Natural killer cell (primary cell): ENCODE measurements at regions of chr18 and their contacts with region 1.

Region 1: DNA sequence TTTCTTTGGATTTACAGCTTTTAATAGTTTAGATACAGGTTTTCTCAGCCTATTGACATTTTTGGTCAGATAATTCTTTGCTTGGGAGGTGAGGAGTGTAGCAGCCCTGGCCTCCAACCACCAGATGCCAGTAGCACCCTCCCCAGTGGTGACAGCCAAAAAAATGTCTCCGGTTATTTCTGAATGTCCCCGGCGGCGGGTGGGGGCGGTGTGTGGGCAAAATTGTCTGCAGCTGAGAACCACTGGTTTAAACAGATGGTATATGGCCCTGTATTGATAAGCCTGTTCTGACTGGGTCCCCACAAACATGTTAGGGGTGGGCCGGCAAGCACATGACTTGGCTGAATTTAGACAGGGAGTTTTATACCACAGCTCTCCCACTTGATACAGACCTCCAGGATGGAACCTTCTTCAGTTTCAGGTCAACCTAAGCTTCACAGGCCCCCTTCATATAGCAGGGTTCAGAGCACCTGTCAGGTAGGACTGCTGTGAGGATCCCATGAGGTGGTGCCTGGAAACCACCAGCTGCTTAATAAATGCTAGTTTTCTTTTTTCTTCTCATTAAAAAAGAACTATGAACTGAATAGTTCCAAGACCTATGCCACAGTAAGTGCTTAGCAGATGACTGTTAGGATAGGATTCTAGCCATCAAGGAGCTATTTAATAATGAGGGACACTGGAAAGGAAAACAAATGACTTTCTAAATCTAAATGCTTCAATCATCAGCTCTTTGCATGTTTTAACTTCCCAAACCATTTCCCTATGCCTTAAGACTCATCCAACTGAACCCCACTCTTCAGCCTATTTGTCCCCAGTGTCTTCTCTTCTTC is 18.1 kb downstream of the LPIN2 start:
- DNase-seq: peak; percentile 61 to 88
- ATAC-seq: peak; percentile 93 to 97 (median 96)
- H3K4me3 ChIP-seq: no peak overlapping the region
- H3K4me3 Mint-ChIP-seq: no peak overlapping the region
- H3K27ac ChIP-seq: no peak overlapping the region
- H3K27ac Mint-ChIP-seq: peak overlapping the region; percentile 35 to 63
- H3K4me1 ChIP-seq: peaks cover 28% of the 10 kb centered on the region
- H3K4me1 Mint-ChIP-seq: peaks cover 41 to 56% of the 10 kb centered on the region in 2 donors
- H3K27me3 ChIP-seq: no peaks in the 10 kb centered on the region
- H3K27me3 Mint-ChIP-seq: no peaks in the 10 kb centered on the region
- CTCF ChIP-seq: peak; percentile 74

Region 2: DNA sequence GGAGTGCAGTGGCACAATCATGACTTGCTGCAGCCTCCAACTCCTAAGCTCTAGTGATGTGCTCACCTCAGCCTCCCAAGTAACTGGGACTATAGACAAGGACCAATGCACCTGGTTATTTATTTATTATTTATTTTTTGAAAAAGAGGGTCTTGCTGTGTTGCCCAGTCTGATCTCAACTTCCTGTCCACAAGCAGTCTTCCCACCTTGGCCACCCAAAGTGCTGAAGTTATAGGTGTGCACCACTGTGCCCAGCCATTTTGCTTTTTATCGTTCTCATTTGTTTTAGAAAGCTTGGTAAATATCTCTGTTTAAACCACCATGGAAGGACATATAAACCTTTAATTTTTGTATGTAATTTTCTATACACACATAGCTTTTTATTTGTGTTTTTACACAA is 265.1 kb before region 1 on chr18:
- intact Hi-C with region 1: no loop called
- DNase-seq: no peak
- ATAC-seq: no peak
- H3K4me3 ChIP-seq: no peak overlapping the region
- H3K4me3 Mint-ChIP-seq: no peak overlapping the region
- H3K27ac ChIP-seq: no peak overlapping the region
- H3K27ac Mint-ChIP-seq: no peak overlapping the region
- H3K4me1 ChIP-seq: no peaks in the 10 kb centered on the region
- H3K4me1 Mint-ChIP-seq: peaks cover 0 to 6% of the 10 kb centered on the region in 2 donors
- H3K27me3 ChIP-seq: no peaks in the 10 kb centered on the region
- H3K27me3 Mint-ChIP-seq: no peaks in the 10 kb centered on the region
- CTCF ChIP-seq: no peak

Region 3: GRCh38 chr18:3129053-3129864 is 134.4 kb after region 1 on chr18:
- intact Hi-C with region 1: loop called (anchors 1 kb)
- DNase-seq: peak; percentile 72 to 90
- ATAC-seq: peak; percentile 92 to 99 (median 99)
- H3K4me3 ChIP-seq: no peak overlapping the region
- H3K4me3 Mint-ChIP-seq: no peak overlapping the region
- H3K27ac ChIP-seq: no peak overlapping the region
- H3K27ac Mint-ChIP-seq: no peak overlapping the region
- H3K4me1 ChIP-seq: no peaks in the 10 kb centered on the region
- H3K4me1 Mint-ChIP-seq: peaks cover 7 to 8% of the 10 kb centered on the region in 2 donors
- H3K27me3 ChIP-seq: no peaks in the 10 kb centered on the region
- H3K27me3 Mint-ChIP-seq: peaks cover 0 to 3% of the 10 kb centered on the region in 2 donors
- CTCF ChIP-seq: peak; percentile 75

Region 4: GRCh38 chr18:3151399-3152264 is 156.8 kb after region 1 on chr18:
- intact Hi-C with region 1: loop called (anchors 1 kb)
- DNase-seq: peak in 1 of 2 donors; percentile 61
- ATAC-seq: peak in 2 of 3 donors; percentile 44 to 46
- H3K4me3 ChIP-seq: no peak overlapping the region
- H3K4me3 Mint-ChIP-seq: no peak overlapping the region
- H3K27ac ChIP-seq: no peak overlapping the region
- H3K27ac Mint-ChIP-seq: no peak overlapping the region
- H3K4me1 ChIP-seq: peaks cover 3% of the 10 kb centered on the region
- H3K4me1 Mint-ChIP-seq: peaks cover 0 to 4% of the 10 kb centered on the region in 2 donors
- H3K27me3 ChIP-seq: no peaks in the 10 kb centered on the region
- H3K27me3 Mint-ChIP-seq: no peaks in the 10 kb centered on the region
- CTCF ChIP-seq: peak; percentile 94